B cell (primary cell): ENCODE measurements at regions of chr22 and their contacts with region 1.

Region 1: GRCh38 chr22:42863349-42863961 is 6.4 kb upstream of the ARFGAP3 start:
- DNase-seq: peak; percentile 60
- ATAC-seq: peak; percentile 52
- H3K4me3 ChIP-seq: no peak overlapping the region
- H3K4me3 Mint-ChIP-seq: peak overlapping the region; percentile 82
- H3K27ac ChIP-seq: peak overlapping the region; percentile 45
- H3K27ac Mint-ChIP-seq: peak overlapping the region; percentile 95
- H3K4me1 ChIP-seq: peaks cover 17 to 44% of the 10 kb centered on the region in 2 donors
- H3K4me1 Mint-ChIP-seq: peaks cover 36% of the 10 kb centered on the region
- H3K27me3 ChIP-seq: no peaks in the 10 kb centered on the region
- H3K27me3 Mint-ChIP-seq: no peaks in the 10 kb centered on the region
- CTCF ChIP-seq: no peak

Region 2: DNA sequence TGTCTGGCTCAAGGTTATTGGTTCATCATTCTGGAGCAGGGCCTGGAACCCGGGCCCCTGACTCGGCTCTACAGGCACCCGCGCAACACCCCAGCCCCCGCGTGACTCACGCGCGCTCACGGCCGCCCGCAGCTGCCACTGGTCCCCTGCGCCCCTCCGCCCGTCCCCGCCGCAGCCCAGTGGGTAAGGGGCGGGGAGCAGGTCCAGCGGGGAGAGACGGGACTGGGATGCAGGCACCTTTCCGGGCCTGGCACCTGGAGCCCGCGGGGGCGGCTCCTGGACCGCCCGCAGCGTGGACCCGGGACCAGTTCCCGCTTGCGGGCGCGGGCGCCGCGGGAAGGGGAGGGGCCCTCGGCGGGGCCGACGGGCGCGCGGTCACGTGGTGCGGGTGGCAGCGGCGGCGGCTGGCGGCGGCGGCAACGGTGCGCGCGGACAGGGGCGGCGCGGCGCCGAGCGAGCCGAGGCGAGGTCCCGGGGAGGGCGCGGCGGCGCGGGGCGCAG is 887.0 kb before region 1 on chr22:
- CTCF ChIA-PET with region 1: no interaction called
- POLR2A ChIA-PET with region 1: no interaction called
- intact Hi-C with region 1: no loop called
- DNase-seq: peak; percentile 67
- ATAC-seq: peak; percentile 69
- H3K4me3 ChIP-seq: peak overlapping the region in 3 of 5 experiments; percentile 54 to 67 (median 55)
- H3K4me3 Mint-ChIP-seq: peak overlapping the region; percentile 69
- H3K27ac ChIP-seq: no peak overlapping the region
- H3K27ac Mint-ChIP-seq: peak overlapping the region; percentile 20
- H3K4me1 ChIP-seq: peaks cover 10 to 12% of the 10 kb centered on the region in 2 donors
- H3K4me1 Mint-ChIP-seq: peaks cover 16% of the 10 kb centered on the region
- H3K27me3 ChIP-seq: peaks cover 0 to 55% (median 26%) of the 10 kb centered on the region in 4 experiments
- H3K27me3 Mint-ChIP-seq: peaks cover 41% of the 10 kb centered on the region
- CTCF ChIP-seq: no peak

Region 3: GRCh38 chr22:42780070-42780540 is 83.3 kb before region 1 on chr22:
- CTCF ChIA-PET with region 1: interaction called, 12 read pairs
- POLR2A ChIA-PET with region 1: no interaction called
- intact Hi-C with region 1: no loop called
- DNase-seq: peak; percentile 83
- ATAC-seq: peak; percentile 68
- H3K4me3 ChIP-seq: no peak overlapping the region
- H3K4me3 Mint-ChIP-seq: no peak overlapping the region
- H3K27ac ChIP-seq: no peak overlapping the region
- H3K27ac Mint-ChIP-seq: no peak overlapping the region
- H3K4me1 ChIP-seq: peaks cover 0 to 3% of the 10 kb centered on the region in 2 donors
- H3K4me1 Mint-ChIP-seq: peaks cover 3% of the 10 kb centered on the region
- H3K27me3 ChIP-seq: no peaks in the 10 kb centered on the region
- H3K27me3 Mint-ChIP-seq: no peaks in the 10 kb centered on the region
- CTCF ChIP-seq: peak; percentile 88

Region 4: GRCh38 chr22:42967933-42968332 is 104.5 kb after region 1 on chr22:
- CTCF ChIA-PET with region 1: interaction called, 35 read pairs
- POLR2A ChIA-PET with region 1: interaction called, 6 read pairs
- intact Hi-C with region 1: loop called (anchors 2 kb)
- DNase-seq: peak; percentile 77
- ATAC-seq: peak; percentile 63
- H3K4me3 ChIP-seq: no peak overlapping the region
- H3K4me3 Mint-ChIP-seq: no peak overlapping the region
- H3K27ac ChIP-seq: no peak overlapping the region
- H3K27ac Mint-ChIP-seq: peak overlapping the region; percentile 46
- H3K4me1 ChIP-seq: peaks cover 7 to 16% of the 10 kb centered on the region in 2 donors
- H3K4me1 Mint-ChIP-seq: peaks cover 48% of the 10 kb centered on the region
- H3K27me3 ChIP-seq: no peaks in the 10 kb centered on the region
- H3K27me3 Mint-ChIP-seq: no peaks in the 10 kb centered on the region
- CTCF ChIP-seq: peak; percentile 46

Region 5: GRCh38 chr22:43036282-43036829 is 172.9 kb after region 1 on chr22:
- CTCF ChIA-PET with region 1: interaction called, 35 read pairs
- POLR2A ChIA-PET with region 1: no interaction called
- intact Hi-C with region 1: loop called (anchors 1 kb)
- DNase-seq: no peak
- ATAC-seq: no peak
- H3K4me3 ChIP-seq: no peak overlapping the region
- H3K4me3 Mint-ChIP-seq: no peak overlapping the region
- H3K27ac ChIP-seq: no peak overlapping the region
- H3K27ac Mint-ChIP-seq: no peak overlapping the region
- H3K4me1 ChIP-seq: peaks cover 0 to 6% of the 10 kb centered on the region in 2 donors
- H3K4me1 Mint-ChIP-seq: peaks cover 5% of the 10 kb centered on the region
- H3K27me3 ChIP-seq: no peaks in the 10 kb centered on the region
- H3K27me3 Mint-ChIP-seq: no peaks in the 10 kb centered on the region
- CTCF ChIP-seq: no peak

Region 6: GRCh38 chr22:43136255-43136654 is 272.8 kb after region 1 on chr22:
- CTCF ChIA-PET with region 1: interaction called, 9 read pairs
- POLR2A ChIA-PET with region 1: no interaction called
- intact Hi-C with region 1: loop called (anchors 10 kb)
- DNase-seq: peak; percentile 71
- ATAC-seq: peak; percentile 92
- H3K4me3 ChIP-seq: no peak overlapping the region
- H3K4me3 Mint-ChIP-seq: no peak overlapping the region
- H3K27ac ChIP-seq: no peak overlapping the region
- H3K27ac Mint-ChIP-seq: no peak overlapping the region
- H3K4me1 ChIP-seq: peaks cover 0 to 10% of the 10 kb centered on the region in 2 donors
- H3K4me1 Mint-ChIP-seq: peaks cover 8% of the 10 kb centered on the region
- H3K27me3 ChIP-seq: no peaks in the 10 kb centered on the region
- H3K27me3 Mint-ChIP-seq: no peaks in the 10 kb centered on the region
- CTCF ChIP-seq: peak; percentile 75